ENCODE measurements at regions of chr3 and their contacts with region 1.

Region 1: DNA sequence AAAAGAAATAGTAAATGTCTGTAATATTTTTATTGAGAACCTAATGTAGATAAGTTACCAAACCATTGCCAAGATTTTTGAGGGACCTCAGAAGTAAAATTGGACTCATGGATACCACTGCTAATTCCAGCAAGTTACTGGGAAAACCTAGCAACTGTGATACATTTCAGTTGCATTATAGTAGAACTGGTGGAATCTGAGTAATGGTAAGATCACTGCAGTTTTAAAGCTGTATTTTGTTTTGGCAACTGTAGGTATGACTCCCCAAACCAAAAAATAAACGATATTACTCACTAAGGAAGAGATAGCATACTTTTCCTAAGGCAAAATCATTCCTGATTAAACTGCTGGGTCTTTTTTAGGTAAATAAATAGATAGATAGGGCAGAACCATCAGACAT is 54.0 kb downstream of the ARMC8 start:
- DNase-seq: peak; percentile 61
- ATAC-seq: peak; percentile 66
- H3K4me3 ChIP-seq: no peak overlapping the region
- H3K27ac ChIP-seq: peak overlapping the region; percentile 65
- H3K4me1 ChIP-seq: peaks cover 18% of the 10 kb centered on the region
- H3K27me3 ChIP-seq: no peaks in the 10 kb centered on the region
- CTCF ChIP-seq: no peak

Region 2: DNA sequence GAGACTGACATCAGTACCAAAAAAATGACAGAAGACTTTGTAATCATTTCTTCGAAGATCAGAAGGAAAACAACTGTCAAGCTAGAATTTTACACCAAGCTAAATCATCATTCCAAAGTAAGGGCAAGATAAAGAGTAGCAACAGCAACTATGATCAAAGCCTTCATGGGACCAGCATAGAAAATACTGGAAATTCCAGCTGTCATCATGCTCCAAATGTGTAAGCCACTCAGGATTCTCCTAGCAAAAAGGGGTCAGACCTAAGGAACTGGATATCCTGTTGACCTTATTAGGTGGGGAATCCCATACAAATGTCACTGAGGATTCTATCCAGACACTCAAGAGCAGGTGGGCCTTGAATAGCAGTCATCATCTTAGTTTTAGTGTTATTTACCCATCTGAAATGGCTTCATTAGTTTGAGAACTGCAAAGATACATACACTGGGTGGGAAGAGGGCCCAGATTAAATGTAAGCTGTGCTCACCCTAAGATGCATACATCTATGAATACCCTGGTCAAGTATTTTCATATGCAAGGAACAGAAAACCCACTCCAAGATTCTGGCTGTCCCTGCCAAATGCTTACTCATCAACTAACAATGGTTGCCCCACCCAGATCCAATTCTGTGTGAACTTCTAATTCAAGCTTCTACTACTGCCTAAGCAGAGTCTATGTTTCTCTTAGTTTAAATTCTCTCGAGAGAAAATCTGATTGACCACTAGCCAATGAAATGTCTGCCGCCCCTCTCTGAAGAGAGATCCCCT is 197.6 kb before region 1 on chr3:
- CTCF ChIA-PET with region 1: no interaction called
- POLR2A ChIA-PET with region 1: no interaction called
- intact Hi-C with region 1: no loop called
- DNase-seq: peak; percentile 78
- ATAC-seq: peak; percentile 86
- H3K4me3 ChIP-seq: no peak overlapping the region
- H3K27ac ChIP-seq: peak overlapping the region; percentile 39
- H3K4me1 ChIP-seq: peaks cover 17% of the 10 kb centered on the region
- H3K27me3 ChIP-seq: no peaks in the 10 kb centered on the region
- CTCF ChIP-seq: no peak

Region 3: DNA sequence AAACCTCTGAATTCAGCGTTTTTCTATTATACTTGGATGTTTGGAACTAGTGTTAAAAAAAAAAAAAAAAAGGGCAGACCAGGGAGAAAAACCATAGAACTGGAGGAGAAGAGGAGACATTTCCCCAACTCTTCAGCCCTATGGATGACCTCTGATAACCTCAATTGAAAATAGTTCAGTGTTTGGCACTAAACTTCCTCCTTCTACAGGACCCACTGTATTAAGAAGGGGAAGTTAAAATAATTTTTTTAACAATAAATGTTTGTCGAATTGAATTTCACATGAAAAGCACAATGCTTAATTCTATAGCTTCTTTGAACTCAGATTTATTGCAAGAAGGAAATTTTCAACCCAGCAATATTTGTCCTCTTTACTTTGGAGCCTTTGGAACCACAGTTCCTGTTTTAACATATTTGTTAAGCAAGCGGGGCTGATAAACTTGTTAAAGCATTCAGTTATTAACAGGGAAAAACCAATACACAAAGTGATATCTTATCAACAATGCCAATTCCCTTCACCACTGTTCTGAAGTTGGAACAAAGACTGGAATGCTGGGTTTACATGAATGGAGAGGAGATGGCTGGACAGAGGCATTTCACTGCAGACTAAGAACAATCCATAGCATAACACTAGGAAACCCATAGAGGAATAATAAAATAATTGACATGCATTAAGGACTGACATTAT is 105.8 kb before region 1 on chr3:
- CTCF ChIA-PET with region 1: no interaction called
- POLR2A ChIA-PET with region 1: no interaction called
- intact Hi-C with region 1: no loop called
- DNase-seq: no peak
- ATAC-seq: no peak
- H3K4me3 ChIP-seq: no peak overlapping the region
- H3K27ac ChIP-seq: no peak overlapping the region
- H3K4me1 ChIP-seq: no peaks in the 10 kb centered on the region
- H3K27me3 ChIP-seq: no peaks in the 10 kb centered on the region
- CTCF ChIP-seq: no peak

Region 4: GRCh38 chr3:138186803-138187295 is 54.2 kb before region 1 on chr3:
- CTCF ChIA-PET with region 1: no interaction called
- POLR2A ChIA-PET with region 1: interaction called, 3 read pairs
- intact Hi-C with region 1: loop called (anchors 1 kb)
- DNase-seq: peak; percentile 81
- ATAC-seq: peak; percentile 36
- H3K4me3 ChIP-seq: peak overlapping the region; percentile 81
- H3K27ac ChIP-seq: peak overlapping the region; percentile 75
- H3K4me1 ChIP-seq: peaks cover 35% of the 10 kb centered on the region
- H3K27me3 ChIP-seq: no peaks in the 10 kb centered on the region
- CTCF ChIP-seq: no peak

Region 5: DNA sequence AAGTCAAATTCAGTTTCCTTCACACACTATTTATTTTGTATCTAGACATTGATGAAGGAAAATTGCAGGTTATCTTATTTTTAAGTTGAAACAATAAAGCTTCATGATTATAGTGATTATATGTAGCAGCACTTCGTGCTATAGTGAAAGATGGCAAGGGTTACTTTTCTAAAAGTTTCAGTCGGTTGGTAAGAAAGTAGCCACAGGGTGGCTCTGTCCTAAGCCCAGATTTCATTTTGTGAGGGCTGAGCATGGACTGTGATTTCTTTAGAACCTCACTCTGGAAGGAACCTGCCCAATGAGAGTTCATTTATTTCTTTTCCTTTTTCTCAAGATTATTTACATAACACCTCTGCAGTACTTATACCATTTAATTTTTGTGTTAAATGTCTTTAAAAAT is 22.0 kb after region 1 on chr3:
- CTCF ChIA-PET with region 1: no interaction called
- POLR2A ChIA-PET with region 1: no interaction called
- intact Hi-C with region 1: no loop called
- DNase-seq: no peak
- ATAC-seq: peak; percentile 27; the same call in 1 of the 2 replicates
- H3K4me3 ChIP-seq: no peak overlapping the region
- H3K27ac ChIP-seq: no peak overlapping the region
- H3K4me1 ChIP-seq: no peaks in the 10 kb centered on the region
- H3K27me3 ChIP-seq: no peaks in the 10 kb centered on the region
- CTCF ChIP-seq: peak; percentile 28; the same call in 1 of the 2 replicates